ENCODE measurements at regions of chr6 and their contacts with region 1.

Region 1: GRCh38 chr6:3057063-3057770 is 11.1 kb upstream of the RIPK1 start:
- H3K4me3 ChIP-seq: no peak overlapping the region
- H3K27ac ChIP-seq: no peak overlapping the region
- H3K4me1 ChIP-seq: no peaks in the 10 kb centered on the region
- CTCF ChIP-seq: no peak

Region 2: GRCh38 chr6:2993755-2994317 is 63.4 kb before region 1 on chr6:
- CTCF ChIA-PET with region 1: interaction called, 71 read pairs
- POLR2A ChIA-PET with region 1: no interaction called
- H3K4me3 ChIP-seq: no peak overlapping the region
- H3K27ac ChIP-seq: no peak overlapping the region
- H3K4me1 ChIP-seq: no peaks in the 10 kb centered on the region
- CTCF ChIP-seq: no peak

Region 3: DNA sequence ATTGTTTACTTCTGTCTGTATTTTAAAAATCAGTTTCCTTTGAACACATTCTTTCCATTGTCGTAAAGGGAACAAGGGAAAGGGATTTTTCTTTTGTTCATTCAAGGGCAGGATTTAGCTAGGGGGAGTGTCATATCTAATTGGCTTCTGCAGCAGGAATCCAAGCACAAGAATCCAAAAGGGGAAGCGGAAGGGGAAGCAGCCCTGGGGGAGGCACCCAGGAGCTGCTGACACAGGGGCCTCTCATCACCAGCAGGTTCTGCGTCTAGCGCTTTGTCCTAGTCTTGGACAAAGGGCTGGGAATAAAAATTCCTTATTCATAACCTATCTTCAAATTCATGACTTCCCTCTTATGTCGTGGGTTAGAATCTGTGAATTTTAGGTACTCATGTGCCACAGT is 24.7 kb after region 1 on chr6:
- CTCF ChIA-PET with region 1: no interaction called
- POLR2A ChIA-PET with region 1: no interaction called
- H3K4me3 ChIP-seq: no peak overlapping the region
- H3K27ac ChIP-seq: no peak overlapping the region
- H3K4me1 ChIP-seq: no peaks in the 10 kb centered on the region
- CTCF ChIP-seq: no peak

Measured in HEK293 (cell line).